ENCODE measurements at regions of chr17 and their contacts with region 1.

Region 1: DNA sequence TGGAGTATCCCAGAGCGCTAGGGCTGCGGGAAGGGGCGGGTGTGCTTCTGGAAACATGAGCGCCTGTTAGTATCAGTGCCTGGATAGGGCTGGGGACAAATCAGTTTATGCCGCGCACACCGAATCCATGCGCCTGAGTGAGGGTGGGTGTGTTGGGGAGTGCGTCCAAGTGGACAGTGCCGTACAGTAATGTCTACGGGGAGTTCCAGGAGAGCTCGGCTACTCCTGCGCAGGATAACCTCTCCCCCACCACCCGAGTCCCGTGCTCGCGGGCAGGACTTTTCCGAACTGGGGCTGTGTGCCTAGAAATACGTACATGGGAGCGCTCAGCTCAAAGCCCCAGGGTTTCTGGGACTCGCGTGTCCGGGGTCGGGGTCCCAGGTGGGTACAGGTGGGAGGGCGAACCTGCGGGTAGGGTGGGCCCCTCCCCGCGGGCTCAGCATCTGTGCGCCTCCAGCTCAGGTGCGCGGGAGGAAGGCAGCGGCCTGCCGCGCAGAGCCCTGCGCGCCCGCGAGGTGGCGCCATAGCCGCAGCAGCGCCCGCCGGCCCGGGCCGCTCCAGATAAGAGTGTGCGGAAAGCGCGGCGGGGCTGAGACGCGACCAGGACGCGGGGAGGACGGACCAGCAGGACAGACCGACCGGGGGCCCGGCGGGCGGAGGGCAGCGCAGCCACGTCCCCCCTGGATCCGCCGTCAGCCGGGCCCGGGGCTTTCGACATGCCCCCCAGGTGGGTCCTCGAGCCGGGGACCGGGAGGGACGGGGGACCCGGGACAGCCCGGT is at the start of gene HIC1:
- DNase-seq: peak; percentile 93
- ATAC-seq: peak; percentile 74
- total RNA-seq, gene HIC1: 22.7 TPM

Region 2: DNA sequence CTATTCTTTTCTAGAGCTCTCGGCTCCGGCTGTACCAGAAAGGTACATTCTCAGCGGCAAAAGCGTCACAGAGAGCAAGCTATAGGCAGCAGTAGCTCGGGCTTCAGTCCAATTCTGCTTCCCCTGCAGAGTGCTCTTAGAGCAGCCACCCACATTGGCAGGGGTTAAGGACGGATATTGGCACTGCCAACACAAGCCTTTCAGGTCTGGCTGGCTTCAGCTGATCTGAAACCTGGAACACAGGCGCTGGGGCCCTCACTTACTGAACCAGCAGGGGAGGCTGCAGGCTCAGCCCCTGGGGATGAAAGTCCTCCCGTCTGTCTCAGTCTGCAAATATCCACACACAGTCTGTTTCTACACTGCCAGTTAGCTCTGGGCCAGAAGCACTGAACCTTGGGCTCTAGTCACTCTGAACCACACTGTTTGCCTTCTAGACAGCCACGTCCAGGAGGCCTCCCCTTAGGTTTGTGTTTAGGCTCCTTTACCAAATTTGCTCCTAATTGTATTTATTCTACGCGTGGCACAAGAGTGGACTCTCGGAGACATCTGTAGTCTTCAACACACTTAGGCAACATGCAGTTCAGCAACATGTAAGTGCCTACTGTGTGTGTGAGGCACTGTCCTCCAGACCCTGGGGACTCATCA is 40.3 kb after region 1 on chr17:
- intact Hi-C with region 1: loop called (anchors 5 kb)
- DNase-seq: peak; percentile 83
- ATAC-seq: peak; percentile 89

Region 3: GRCh38 chr17:2122641-2123302 is 68.1 kb after region 1 on chr17:
- intact Hi-C with region 1: loop called (anchors 5 kb)
- DNase-seq: peak; percentile 85
- ATAC-seq: peak; percentile 75

Region 4: GRCh38 chr17:2244545-2245525 is 190.1 kb after region 1 on chr17:
- intact Hi-C with region 1: loop called (anchors 1 kb)
- DNase-seq: peak; percentile 95
- ATAC-seq: peak; percentile 88

Region 5: GRCh38 chr17:2283302-2283701 is 228.6 kb after region 1 on chr17:
- intact Hi-C with region 1: loop called (anchors 1 kb)
- DNase-seq: no peak
- ATAC-seq: no peak